ENCODE measurements at regions of chr11 and their contacts with region 1.

Region 1: DNA sequence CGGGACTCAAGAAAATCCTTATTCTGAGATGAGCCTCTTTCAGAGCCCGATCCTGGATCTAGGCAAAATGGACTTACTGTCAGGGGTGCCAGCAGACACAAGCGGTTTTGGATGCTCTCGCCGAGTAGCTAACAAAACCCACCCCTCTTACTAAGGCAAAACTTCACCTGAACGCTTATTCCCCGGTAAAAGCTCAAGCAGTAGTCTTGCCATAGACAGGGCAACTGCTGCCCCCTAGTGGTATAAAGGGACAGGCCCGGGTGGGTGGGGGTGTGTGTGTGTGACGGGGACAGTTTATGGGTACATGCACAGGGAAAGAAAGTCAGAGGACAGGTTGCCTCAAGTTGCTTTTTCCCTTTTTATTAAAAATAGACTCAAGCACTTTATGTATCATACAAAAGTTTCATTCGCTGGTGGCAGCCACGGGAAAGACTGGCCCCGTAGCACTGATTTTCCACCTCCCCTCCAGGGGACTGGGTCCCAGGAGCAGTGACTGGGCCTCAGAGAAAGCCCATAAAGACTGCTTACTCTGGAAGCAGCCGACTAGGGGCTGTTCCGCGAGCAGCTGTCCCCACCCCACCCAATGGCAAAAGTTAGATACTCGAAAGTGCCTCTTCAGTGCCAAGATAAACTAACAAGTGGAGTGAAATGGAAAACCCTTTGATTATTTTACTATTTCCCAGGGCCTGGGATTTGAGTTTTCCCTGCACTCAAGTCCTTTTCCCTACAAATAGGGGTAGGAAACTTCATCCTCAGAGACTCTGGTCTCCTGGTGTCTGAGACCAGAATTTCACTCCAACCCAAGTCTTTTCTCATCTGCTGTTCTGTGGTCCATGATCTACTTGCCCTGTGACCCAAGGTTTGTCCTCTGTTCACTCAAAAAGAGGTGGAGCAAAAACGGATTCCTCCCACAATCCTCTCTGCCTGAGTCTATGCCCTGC is 4.7 kb downstream of the YPEL4 start:
- DNase-seq: peak; percentile 78

Region 2: GRCh38 chr11:57499413-57499982 is 145.5 kb before region 1 on chr11:
- in situ Hi-C with region 1: loop called (anchors 10 kb)
- DNase-seq: no peak

Region 3: GRCh38 chr11:57567515-57568329 is 77.3 kb before region 1 on chr11 and contains the start of gene UBE2L6:
- in situ Hi-C with region 1: loop called (anchors 5 kb)
- DNase-seq: peak; percentile 26